Psoas muscle (tissue), 8 donors: ENCODE measurements at regions of chr2 and their contacts with region 1.

Region 1: GRCh38 chr2:97806738-97807618 is 93.6 kb downstream of the ZAP70 start:
- DNase-seq: peak; percentile 84 to 92
- ATAC-seq: peak; percentile 94 to 99 (median 96)
- H3K4me3 ChIP-seq: no peak overlapping the region
- H3K27ac ChIP-seq: peak overlapping the region; percentile 58
- H3K4me1 ChIP-seq: peaks cover 12% of the 10 kb centered on the region
- H3K27me3 ChIP-seq: no peaks in the 10 kb centered on the region
- CTCF ChIP-seq: peak; percentile 95

Region 2: GRCh38 chr2:98175811-98176210 is 368.8 kb after region 1 on chr2:
- intact Hi-C with region 1: loop called (anchors 5 to 10 kb)
- DNase-seq: no peak
- ATAC-seq: peak; percentile 34 to 52 (median 46)
- H3K4me3 ChIP-seq: no peak overlapping the region
- H3K27ac ChIP-seq: no peak overlapping the region
- H3K4me1 ChIP-seq: peaks cover 7% of the 10 kb centered on the region
- H3K27me3 ChIP-seq: peaks cover 0 to 2% (median 0%) of the 10 kb centered on the region in 3 donors
- CTCF ChIP-seq: peak; percentile 24

Region 3: GRCh38 chr2:98188351-98189049 is 381.5 kb after region 1 on chr2:
- intact Hi-C with region 1: loop called in 1 of 2 experiments (anchors 10 kb)
- DNase-seq: no peak
- ATAC-seq: peak in 3 of 4 donors; percentile 44 to 47 (median 45)
- H3K4me3 ChIP-seq: no peak overlapping the region
- H3K27ac ChIP-seq: no peak overlapping the region
- H3K4me1 ChIP-seq: peaks cover 9% of the 10 kb centered on the region
- H3K27me3 ChIP-seq: no peaks in the 10 kb centered on the region
- CTCF ChIP-seq: peak; percentile 15

Region 4: GRCh38 chr2:98269830-98270229 is 462.9 kb after region 1 on chr2:
- intact Hi-C with region 1: loop called (anchors 2 to 10 kb)
- DNase-seq: no peak
- ATAC-seq: no peak
- H3K4me3 ChIP-seq: no peak overlapping the region
- H3K27ac ChIP-seq: no peak overlapping the region
- H3K4me1 ChIP-seq: no peaks in the 10 kb centered on the region
- H3K27me3 ChIP-seq: no peaks in the 10 kb centered on the region
- CTCF ChIP-seq: no peak

Region 5: GRCh38 chr2:98385050-98385699 is 578.2 kb after region 1 on chr2:
- intact Hi-C with region 1: loop called (anchors 1 to 2 kb)
- DNase-seq: peak; percentile 66 to 86
- ATAC-seq: peak; percentile 83 to 98 (median 90)
- H3K4me3 ChIP-seq: no peak overlapping the region
- H3K27ac ChIP-seq: no peak overlapping the region
- H3K4me1 ChIP-seq: no peaks in the 10 kb centered on the region
- H3K27me3 ChIP-seq: peaks cover 0 to 2% (median 0%) of the 10 kb centered on the region in 3 donors
- CTCF ChIP-seq: peak; percentile 90